Activated CD8-positive, alpha-beta T cell treated with anti-CD3 and anti-CD28 coated beads for 36 hours (primary cell): ENCODE measurements at regions of chr12 and their contacts with region 1.

Region 1: DNA sequence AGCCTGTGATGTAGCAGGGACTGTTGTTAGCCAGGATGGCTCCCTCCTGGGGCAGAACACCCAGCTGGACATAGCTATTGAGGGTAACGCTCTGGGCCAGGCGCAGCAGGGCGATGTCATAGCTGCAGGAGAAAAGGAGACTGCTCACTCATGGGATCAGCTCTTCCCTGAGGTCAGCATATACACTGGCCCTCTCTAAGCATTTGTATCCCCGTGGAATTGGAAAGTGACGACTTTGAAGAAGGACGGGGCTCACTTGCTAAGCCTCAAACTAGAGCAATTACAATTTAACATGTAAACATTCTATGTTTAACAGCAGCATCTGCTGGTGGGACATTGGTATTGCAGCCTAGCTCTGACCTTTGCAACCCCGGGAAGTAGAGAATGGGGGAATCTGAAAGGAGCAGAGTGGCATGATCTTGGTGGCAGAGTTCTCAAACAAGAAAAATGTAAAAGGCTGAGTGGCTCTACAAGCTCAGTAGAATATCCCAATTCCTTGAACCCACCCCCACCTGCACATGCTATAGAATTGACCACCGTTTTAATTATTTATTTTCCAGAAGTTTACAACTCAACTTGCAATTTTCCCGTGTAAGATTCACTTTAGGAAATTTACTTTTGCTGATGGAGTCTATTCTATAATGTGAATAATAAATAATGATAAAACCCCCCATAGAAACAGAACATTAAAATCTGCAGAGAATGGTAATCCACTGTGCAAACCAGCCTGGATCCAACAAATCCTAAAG is 5.0 kb downstream of the CELA1 start:
- DNase-seq: peak; percentile 83
- ATAC-seq: peak; percentile 97
- H3K4me3 Mint-ChIP-seq: no peak overlapping the region
- H3K27ac Mint-ChIP-seq: peak overlapping the region; percentile 31
- H3K4me1 Mint-ChIP-seq: peaks cover 17% of the 10 kb centered on the region
- H3K27me3 Mint-ChIP-seq: no peaks in the 10 kb centered on the region
- CTCF ChIP-seq: peak; percentile 97

Region 2: DNA sequence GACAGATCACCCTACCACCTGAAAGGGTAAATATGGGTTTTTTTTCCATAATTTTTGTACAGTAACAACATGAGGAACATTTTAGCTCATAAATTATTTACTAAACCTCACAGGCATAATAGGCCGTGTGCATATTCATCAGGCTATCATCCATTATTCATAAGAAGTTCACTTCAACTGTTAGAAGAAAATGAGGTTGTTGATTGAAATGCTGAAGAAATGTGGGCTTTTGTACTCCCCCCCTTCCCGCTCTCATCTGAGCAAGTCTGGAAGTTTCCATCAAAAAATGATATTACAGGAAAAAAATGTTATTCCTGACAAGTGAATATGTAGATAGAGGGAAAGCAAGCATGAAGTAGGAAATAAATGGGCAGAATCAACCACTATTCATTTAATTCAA is 115.7 kb before region 1 on chr12:
- CTCF ChIA-PET with region 1: interaction called, 10 read pairs
- POLR2A ChIA-PET with region 1: no interaction called
- intact Hi-C with region 1: no loop called
- DNase-seq: no peak
- ATAC-seq: no peak
- H3K4me3 Mint-ChIP-seq: no peak overlapping the region
- H3K27ac Mint-ChIP-seq: no peak overlapping the region
- H3K4me1 Mint-ChIP-seq: no peaks in the 10 kb centered on the region
- H3K27me3 Mint-ChIP-seq: no peaks in the 10 kb centered on the region
- CTCF ChIP-seq: no peak

Region 3: GRCh38 chr12:51253276-51253675 is 88.2 kb before region 1 on chr12:
- CTCF ChIA-PET with region 1: interaction called, 18 read pairs
- POLR2A ChIA-PET with region 1: no interaction called
- intact Hi-C with region 1: no loop called
- DNase-seq: no peak
- ATAC-seq: no peak
- H3K4me3 Mint-ChIP-seq: no peak overlapping the region
- H3K27ac Mint-ChIP-seq: no peak overlapping the region
- H3K4me1 Mint-ChIP-seq: peaks cover 2% of the 10 kb centered on the region
- H3K27me3 Mint-ChIP-seq: no peaks in the 10 kb centered on the region
- CTCF ChIP-seq: no peak

Region 4: DNA sequence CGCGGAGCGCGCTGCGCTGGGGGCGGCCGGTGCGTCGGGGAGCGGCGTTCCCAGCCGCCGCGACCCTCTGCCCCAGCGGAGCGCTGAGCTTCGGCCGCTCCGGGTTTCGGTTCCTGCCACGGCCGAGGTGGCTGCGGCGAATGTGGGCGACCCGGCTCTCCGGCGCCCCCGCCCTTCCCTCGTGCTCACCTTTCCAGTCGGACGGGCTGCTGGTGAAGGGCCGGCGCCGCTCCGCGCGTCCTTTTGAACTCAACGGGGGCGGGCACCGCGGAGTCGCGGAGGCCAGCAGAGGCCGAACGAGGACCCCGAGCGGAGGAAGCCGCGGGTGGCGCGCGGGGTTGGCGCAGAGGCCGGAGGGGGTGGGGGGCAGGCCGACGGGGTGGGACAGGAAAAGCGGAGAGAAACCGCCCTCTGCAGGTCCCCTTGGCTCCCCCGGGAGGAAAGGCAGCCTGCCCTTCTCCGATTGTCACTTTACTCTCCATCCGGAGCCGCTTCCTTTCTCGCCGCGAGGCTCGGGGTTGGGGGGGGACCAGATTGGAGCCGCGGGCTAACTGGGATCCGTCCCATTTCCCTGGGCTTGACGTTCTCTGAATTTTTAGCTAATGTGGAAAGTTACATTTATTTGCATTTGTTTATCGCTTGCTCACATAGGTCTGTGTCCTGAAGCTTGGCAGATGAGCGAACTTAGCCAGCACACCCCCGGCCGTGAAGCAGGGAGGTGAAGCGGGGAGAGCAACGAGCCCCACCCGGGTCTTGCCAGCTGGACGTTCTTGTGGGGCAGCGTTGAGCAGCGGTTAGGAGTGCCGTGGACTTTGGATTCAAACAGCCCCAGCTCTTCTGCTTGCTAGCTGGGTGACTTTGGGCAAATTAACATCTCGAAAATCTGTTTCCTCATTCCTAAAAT is 71.1 kb before region 1 on chr12 and contains the start of gene SMAGP:
- CTCF ChIA-PET with region 1: interaction called, 117 read pairs
- POLR2A ChIA-PET with region 1: interaction called, 7 read pairs
- intact Hi-C with region 1: loop called (anchors 5 kb)
- DNase-seq: peak; percentile 56
- ATAC-seq: peak; percentile 55
- H3K4me3 Mint-ChIP-seq: peak within 1 kb of the TSS; percentile 86
- H3K27ac Mint-ChIP-seq: peak within 1 kb of the TSS; percentile 57
- H3K4me1 Mint-ChIP-seq: peaks cover 24% of the 10 kb centered on the region
- H3K27me3 Mint-ChIP-seq: peaks cover 6% of the 10 kb centered on the region
- CTCF ChIP-seq: no peak
- total RNA-seq, gene SMAGP: 0.96 to 1.4 TPM

Region 5: GRCh38 chr12:51293696-51294095 is 47.7 kb before region 1 on chr12:
- CTCF ChIA-PET with region 1: interaction called, 11 read pairs
- POLR2A ChIA-PET with region 1: no interaction called
- intact Hi-C with region 1: no loop called
- DNase-seq: no peak
- ATAC-seq: peak; percentile 83
- H3K4me3 Mint-ChIP-seq: no peak overlapping the region
- H3K27ac Mint-ChIP-seq: peak overlapping the region; percentile 76
- H3K4me1 Mint-ChIP-seq: peaks cover 23% of the 10 kb centered on the region
- H3K27me3 Mint-ChIP-seq: no peaks in the 10 kb centered on the region
- CTCF ChIP-seq: no peak

Region 6: DNA sequence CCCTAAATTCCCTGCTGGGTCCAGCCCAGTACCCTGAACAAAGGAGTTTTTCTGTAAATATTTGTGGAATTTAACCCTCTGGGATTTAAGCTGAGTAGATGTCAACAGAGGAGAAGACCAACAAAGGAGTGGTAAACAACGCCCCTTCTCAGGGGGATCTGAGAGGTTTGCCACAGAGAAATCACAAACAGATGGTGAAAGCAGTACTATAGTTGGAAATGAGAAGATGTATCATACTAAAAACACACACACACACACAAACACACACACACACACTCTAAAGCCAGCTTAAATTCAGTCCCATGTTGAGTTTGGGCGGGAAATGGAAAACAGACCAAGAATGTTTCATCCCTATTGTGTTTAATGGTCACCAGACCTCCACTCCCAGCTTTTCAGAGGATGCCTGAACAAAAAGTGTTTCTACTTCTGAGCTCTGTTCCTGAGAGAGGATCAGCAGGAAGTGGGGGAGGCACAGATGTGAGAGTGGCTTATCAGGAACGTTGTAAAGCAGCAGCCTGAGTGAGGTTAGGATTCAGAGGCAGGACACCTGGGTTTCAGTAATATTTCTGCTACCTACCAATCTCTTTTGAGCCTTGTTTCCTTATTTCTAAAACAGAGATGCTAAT is 20.6 kb before region 1 on chr12:
- CTCF ChIA-PET with region 1: interaction called, 38 read pairs
- POLR2A ChIA-PET with region 1: interaction called, 8 read pairs
- intact Hi-C with region 1: no loop called
- DNase-seq: no peak
- ATAC-seq: no peak
- H3K4me3 Mint-ChIP-seq: peak overlapping the region; percentile 91
- H3K27ac Mint-ChIP-seq: peak overlapping the region; percentile 75
- H3K4me1 Mint-ChIP-seq: peaks cover 64% of the 10 kb centered on the region
- H3K27me3 Mint-ChIP-seq: no peaks in the 10 kb centered on the region
- CTCF ChIP-seq: no peak

Region 7: GRCh38 chr12:51351913-51352532 is 10.6 kb after region 1 on chr12:
- CTCF ChIA-PET with region 1: interaction called, 42 read pairs
- POLR2A ChIA-PET with region 1: interaction called, 4 read pairs
- intact Hi-C with region 1: no loop called
- DNase-seq: peak; percentile 57
- ATAC-seq: peak; percentile 75
- H3K4me3 Mint-ChIP-seq: no peak overlapping the region
- H3K27ac Mint-ChIP-seq: no peak overlapping the region
- H3K4me1 Mint-ChIP-seq: peaks cover under 1% of the 10 kb centered on the region
- H3K27me3 Mint-ChIP-seq: no peaks in the 10 kb centered on the region
- CTCF ChIP-seq: peak; percentile 69

Region 8: DNA sequence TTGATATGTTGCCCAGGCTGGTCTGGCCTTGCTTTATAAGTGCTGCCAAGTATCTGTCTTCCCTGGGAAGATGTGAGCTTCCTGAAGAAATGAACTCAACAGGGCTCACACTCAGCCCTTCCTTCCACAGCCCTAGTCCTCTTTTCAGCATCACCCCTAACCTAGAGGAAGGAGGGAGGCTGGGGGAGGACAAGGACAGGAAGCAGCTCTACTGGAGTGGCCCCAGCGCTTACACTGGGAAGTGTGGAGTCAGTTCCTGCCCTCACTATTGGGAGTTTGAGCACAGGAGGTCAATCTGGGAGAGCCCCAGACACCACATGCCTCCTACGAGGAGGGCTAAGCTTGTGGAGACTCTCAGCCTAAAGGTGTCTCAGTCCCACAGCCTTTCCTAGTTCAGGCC is 32.9 kb after region 1 on chr12:
- CTCF ChIA-PET with region 1: no interaction called
- POLR2A ChIA-PET with region 1: no interaction called
- intact Hi-C with region 1: no loop called
- DNase-seq: no peak
- ATAC-seq: no peak
- H3K4me3 Mint-ChIP-seq: no peak overlapping the region
- H3K27ac Mint-ChIP-seq: no peak overlapping the region
- H3K4me1 Mint-ChIP-seq: peaks cover 43% of the 10 kb centered on the region
- H3K27me3 Mint-ChIP-seq: no peaks in the 10 kb centered on the region
- CTCF ChIP-seq: no peak